CD4-positive, alpha-beta T cell (primary cell): ENCODE measurements at regions of chr15 and their contacts with region 1.

Region 1: DNA sequence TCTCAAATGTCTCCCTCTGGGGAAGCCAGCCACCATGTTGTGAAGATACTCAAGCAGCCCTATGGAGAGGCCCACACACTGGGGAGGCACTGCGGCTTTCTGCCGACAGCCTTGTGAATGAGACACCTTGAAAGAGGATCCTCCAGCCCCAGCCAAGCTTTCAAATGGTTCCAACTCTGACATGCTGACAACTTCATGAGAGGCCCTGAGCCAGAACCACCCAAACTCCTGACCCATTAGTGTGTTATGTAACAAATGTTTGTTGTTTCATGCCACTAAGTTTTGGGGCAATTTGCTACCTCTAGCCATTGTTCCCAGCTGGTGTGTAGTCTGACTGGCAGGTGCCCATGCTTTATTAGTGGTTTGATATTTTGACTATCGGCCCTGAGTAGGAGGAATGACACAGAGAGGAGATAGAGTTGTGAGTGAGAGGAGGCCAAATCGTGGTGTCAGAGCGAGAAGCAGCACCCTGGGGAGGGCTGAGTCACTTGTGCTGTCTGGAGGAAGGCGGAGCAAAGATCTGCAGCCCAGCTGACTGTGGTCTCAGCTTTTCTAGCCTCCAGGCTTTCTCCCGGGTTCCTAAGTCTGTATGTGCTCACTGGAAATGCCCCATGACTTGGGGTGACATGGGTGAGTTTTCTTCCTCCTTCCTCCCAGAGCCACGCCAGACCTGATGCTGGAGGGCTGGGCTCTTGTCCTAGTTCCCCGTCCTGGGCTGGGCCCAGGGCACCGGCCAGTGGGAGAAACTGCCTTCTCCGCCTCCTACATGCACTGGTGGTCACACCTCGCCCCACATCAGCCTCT is 56.7 kb upstream of the BLM start:
- DNase-seq: peak; percentile 22 to 84 (median 60)
- ATAC-seq: peak; percentile 77
- H3K4me3 ChIP-seq: peak overlapping the region; percentile 20
- H3K4me3 Mint-ChIP-seq: peak overlapping the region; percentile 74
- H3K27ac ChIP-seq: no peak overlapping the region
- H3K27ac Mint-ChIP-seq: peak overlapping the region; percentile 46
- H3K4me1 ChIP-seq: peaks cover 74% of the 10 kb centered on the region
- H3K4me1 Mint-ChIP-seq: peaks cover 83% of the 10 kb centered on the region
- H3K27me3 ChIP-seq: peaks cover 8 to 30% of the 10 kb centered on the region in 2 experiments
- H3K27me3 Mint-ChIP-seq: peaks cover 27% of the 10 kb centered on the region
- CTCF ChIP-seq: no peak

Region 2: DNA sequence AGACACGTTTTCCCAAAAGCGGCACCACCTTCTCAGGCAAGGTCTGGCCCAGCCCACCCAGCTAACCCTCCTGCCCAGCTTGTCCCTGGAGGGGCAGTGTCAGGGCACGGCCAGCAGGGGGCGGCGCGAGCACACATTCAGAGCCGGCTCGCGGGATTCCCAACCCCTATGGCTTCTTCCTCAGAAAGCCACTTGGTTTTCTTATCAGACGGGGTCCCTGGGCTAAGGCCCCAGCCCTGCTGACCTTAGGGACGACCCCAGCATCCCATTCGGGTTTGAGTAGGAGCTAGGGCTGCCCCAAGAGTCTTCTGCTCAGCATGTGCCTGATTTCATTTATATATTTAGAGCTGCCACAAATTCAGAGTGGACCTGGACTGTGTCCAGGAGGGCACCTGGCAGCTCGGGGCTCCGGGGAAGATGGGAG is 1453.5 kb before region 1 on chr15:
- CTCF ChIA-PET with region 1: no interaction called
- POLR2A ChIA-PET with region 1: no interaction called
- intact Hi-C with region 1: no loop called
- DNase-seq: peak; percentile 45 to 83 (median 63)
- ATAC-seq: peak; percentile 92
- H3K4me3 ChIP-seq: no peak overlapping the region
- H3K4me3 Mint-ChIP-seq: no peak overlapping the region
- H3K27ac ChIP-seq: no peak overlapping the region
- H3K27ac Mint-ChIP-seq: no peak overlapping the region
- H3K4me1 ChIP-seq: peaks cover 28% of the 10 kb centered on the region
- H3K4me1 Mint-ChIP-seq: peaks cover 24% of the 10 kb centered on the region
- H3K27me3 ChIP-seq: no peaks in the 10 kb centered on the region
- H3K27me3 Mint-ChIP-seq: no peaks in the 10 kb centered on the region
- CTCF ChIP-seq: peak; percentile 98

Region 3: GRCh38 chr15:90571063-90571541 is 89.3 kb before region 1 on chr15:
- CTCF ChIA-PET with region 1: no interaction called
- POLR2A ChIA-PET with region 1: no interaction called
- intact Hi-C with region 1: no loop called
- DNase-seq: peak in 2 of 14 experiments; percentile 53 to 60
- ATAC-seq: no peak
- H3K4me3 ChIP-seq: no peak overlapping the region
- H3K4me3 Mint-ChIP-seq: no peak overlapping the region
- H3K27ac ChIP-seq: peak overlapping the region in 1 of 2 donors; percentile 32
- H3K27ac Mint-ChIP-seq: peak overlapping the region; percentile 77
- H3K4me1 ChIP-seq: peaks cover 77% of the 10 kb centered on the region
- H3K4me1 Mint-ChIP-seq: peaks cover 89% of the 10 kb centered on the region
- H3K27me3 ChIP-seq: no peaks in the 10 kb centered on the region
- H3K27me3 Mint-ChIP-seq: no peaks in the 10 kb centered on the region
- CTCF ChIP-seq: no peak

Region 4: GRCh38 chr15:90648137-90649070 is 12.0 kb before region 1 on chr15:
- CTCF ChIA-PET with region 1: interaction called, 10 read pairs
- POLR2A ChIA-PET with region 1: interaction called, 7 read pairs
- intact Hi-C with region 1: loop called in 1 of 2 experiments (anchors 1 kb)
- DNase-seq: peak; percentile 17 to 83 (median 44)
- ATAC-seq: peak; percentile 83
- H3K4me3 ChIP-seq: no peak overlapping the region
- H3K4me3 Mint-ChIP-seq: peak overlapping the region; percentile 30
- H3K27ac ChIP-seq: no peak overlapping the region
- H3K27ac Mint-ChIP-seq: peak overlapping the region; percentile 16
- H3K4me1 ChIP-seq: peaks cover 27% of the 10 kb centered on the region
- H3K4me1 Mint-ChIP-seq: peaks cover 34% of the 10 kb centered on the region
- H3K27me3 ChIP-seq: peaks cover 0 to 2% of the 10 kb centered on the region in 2 experiments
- H3K27me3 Mint-ChIP-seq: no peaks in the 10 kb centered on the region
- CTCF ChIP-seq: peak; percentile 93

Region 5: GRCh38 chr15:90686435-90687218 is 26.2 kb after region 1 on chr15:
- CTCF ChIA-PET with region 1: no interaction called
- POLR2A ChIA-PET with region 1: no interaction called
- intact Hi-C with region 1: loop called in 1 of 2 experiments (anchors 2 kb)
- DNase-seq: peak in 7 of 14 experiments; percentile 4 to 75 (median 37)
- ATAC-seq: peak; percentile 95
- H3K4me3 ChIP-seq: no peak overlapping the region
- H3K4me3 Mint-ChIP-seq: peak overlapping the region; percentile 11
- H3K27ac ChIP-seq: no peak overlapping the region
- H3K27ac Mint-ChIP-seq: peak overlapping the region; percentile 72
- H3K4me1 ChIP-seq: peaks cover 18% of the 10 kb centered on the region
- H3K4me1 Mint-ChIP-seq: peaks cover 37% of the 10 kb centered on the region
- H3K27me3 ChIP-seq: no peaks in the 10 kb centered on the region
- H3K27me3 Mint-ChIP-seq: no peaks in the 10 kb centered on the region
- CTCF ChIP-seq: no peak